BJ (cell line): ENCODE measurements at regions of chr2 and their contacts with region 1.

Region 1: DNA sequence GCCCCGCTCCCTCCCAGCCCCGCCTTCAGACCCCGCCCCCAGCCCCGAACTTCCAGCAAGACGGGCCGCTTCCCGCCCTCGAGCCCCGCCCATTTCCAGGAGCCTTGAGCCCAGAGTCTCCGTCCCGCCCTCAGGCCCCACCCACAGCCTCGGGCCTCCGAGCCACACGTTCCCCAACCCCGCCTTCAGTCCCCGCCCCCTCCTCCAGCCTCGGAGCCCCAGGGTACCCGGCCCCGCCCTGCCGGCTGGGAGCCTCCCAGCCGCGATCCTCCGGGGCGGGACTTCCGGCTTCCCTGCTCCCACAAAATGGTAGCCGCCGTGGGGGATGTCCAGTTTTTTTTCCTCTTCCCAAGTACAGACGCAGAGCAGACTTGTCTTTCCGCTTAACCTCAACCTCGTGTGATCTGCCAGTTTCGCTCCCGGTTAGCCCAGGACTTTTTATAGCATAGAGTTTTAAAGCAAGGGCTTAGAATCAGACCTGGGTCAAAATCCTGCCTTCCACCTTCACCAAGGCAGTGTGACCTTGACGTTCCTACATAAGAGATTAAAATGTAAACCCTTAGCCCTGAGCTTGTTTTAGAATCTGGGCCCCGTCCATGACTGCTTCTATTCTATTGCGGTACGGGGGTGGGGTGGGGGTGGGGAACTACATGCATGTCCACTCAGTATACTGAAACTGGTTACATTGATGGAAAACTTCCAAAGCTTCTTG is 435 bp upstream of the GPR155 start:
- DNase-seq: peak; percentile 85
- H3K4me3 ChIP-seq: peak overlapping the region; percentile 79
- H3K27me3 ChIP-seq: no peaks in the 10 kb centered on the region
- CTCF ChIP-seq: no peak

Region 2: DNA sequence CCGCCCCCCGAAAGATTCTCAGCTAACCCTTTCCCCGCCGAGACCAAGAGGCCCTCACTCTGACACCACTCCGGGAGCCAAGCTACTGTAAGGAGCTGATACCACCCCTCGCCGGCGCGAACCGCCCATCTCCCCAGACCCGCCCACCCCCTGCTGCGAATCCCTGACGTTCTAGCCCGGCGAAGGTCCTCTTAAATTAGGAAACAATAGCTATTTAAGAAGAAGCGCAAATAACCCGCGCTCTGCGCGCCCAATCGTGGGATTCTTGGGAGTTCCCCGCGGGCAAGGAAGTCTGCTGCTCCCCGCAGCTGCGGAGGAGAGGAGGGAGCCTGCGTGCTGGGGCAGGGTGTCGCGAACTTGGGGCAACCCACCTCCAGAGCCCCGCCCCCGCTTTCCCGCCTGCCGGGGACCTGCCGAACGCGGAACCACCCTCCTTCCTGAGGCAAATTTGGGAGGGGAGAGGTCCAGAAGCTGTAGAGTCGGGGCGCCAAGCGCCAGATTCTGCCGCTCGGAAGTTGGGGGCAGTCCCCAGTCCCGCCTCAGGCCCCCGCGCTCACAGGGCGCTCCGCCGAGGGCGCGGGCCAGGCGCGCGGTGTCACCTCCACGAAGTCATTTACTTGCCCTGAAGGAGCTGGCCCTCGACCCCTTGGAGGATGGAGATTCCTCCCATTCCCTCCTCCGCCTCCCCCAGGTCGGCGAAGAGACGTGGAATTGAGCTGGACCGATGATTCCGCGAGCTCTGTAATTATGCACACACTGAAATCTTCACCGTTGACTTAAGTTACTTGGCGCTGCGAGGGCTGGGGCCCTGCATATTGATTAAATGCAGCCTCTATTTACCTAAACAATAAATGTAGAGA is 160.9 kb before region 1 on chr2:
- CTCF ChIA-PET with region 1: no interaction called
- POLR2A ChIA-PET with region 1: interaction called, 13 read pairs
- DNase-seq: no peak
- H3K4me3 ChIP-seq: peak overlapping the region; percentile 46
- H3K27me3 ChIP-seq: peaks cover 40% of the 10 kb centered on the region
- CTCF ChIP-seq: no peak

Region 3: GRCh38 chr2:174365571-174365970 is 121.7 kb before region 1 on chr2:
- CTCF ChIA-PET with region 1: no interaction called
- POLR2A ChIA-PET with region 1: no interaction called
- DNase-seq: no peak
- H3K4me3 ChIP-seq: no peak overlapping the region
- H3K27me3 ChIP-seq: no peaks in the 10 kb centered on the region
- CTCF ChIP-seq: no peak

Region 4: DNA sequence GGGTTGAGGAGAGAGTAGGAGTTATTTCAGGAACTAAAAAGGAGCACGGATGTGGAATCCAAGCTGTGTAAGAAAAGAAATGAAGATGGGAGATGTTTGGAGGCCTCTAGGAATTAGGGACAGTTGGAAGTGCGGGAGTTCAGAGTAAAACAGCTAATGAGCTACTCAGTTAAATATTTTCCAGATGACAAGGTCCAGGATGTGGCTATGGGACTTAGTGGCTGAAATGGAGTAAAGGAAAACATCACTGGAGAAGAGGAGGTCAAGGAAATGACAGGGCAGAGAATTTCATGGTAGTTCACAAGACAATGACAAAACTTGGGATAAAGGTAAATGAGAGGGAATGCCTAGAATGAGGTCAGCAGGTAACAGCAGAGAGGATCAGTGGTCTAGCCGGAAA is 13.5 kb before region 1 on chr2:
- CTCF ChIA-PET with region 1: no interaction called
- POLR2A ChIA-PET with region 1: no interaction called
- DNase-seq: no peak
- H3K4me3 ChIP-seq: no peak overlapping the region
- H3K27me3 ChIP-seq: no peaks in the 10 kb centered on the region
- CTCF ChIP-seq: no peak